ENCODE measurements at regions of chr21 and their contacts with region 1.

Region 1: GRCh38 chr21:46228345-46229051 is at the start of gene LSS:
- DNase-seq: peak; percentile 98
- H3K4me3 ChIP-seq: peak within 1 kb of the TSS; percentile 99
- H3K27ac ChIP-seq: peak within 1 kb of the TSS; percentile 53
- H3K4me1 ChIP-seq: peaks cover 29% of the 10 kb centered on the region
- CTCF ChIP-seq: no peak
- total RNA-seq, gene LSS: 33.9 and 45.4 TPM in 2 replicates

Region 2: DNA sequence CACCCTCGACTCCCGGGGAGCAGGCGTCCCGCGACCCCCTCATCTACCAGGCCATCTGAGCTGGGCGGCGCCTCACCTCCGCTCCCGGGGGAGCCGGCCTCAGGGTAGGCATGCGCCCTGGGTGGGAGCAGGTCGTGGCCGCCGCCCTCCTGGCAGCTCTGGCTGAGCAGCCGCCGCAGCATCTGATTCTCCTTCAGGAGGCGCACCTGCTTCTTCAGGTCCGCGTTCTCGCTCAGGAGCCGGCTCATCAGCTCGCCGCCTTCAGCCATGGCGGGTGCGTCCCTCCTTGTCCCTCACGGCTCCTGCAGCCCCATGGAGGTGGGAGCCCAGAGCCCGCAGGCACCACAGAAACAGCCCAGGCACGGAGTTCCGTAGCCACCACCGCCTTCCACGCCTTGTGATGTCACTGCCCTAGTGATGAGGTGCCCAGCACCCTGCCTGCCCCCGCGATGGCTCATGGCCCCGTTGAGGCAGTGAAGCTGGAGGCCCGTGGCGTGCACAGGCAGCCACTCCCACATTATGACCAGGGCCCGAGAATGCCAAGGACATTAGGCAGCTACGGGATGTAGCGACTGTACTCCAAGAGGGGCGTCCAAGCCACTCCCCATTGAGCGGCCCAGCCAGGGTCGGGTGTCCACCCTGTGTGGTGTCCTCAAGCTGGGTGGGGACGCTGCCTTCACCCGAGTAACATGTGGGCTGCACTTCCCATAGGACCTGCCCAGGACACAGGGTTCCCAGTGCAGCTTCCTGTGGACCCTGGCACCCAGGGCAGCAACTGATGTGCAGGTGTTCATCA is 45.8 kb before region 1 on chr21:
- CTCF ChIA-PET with region 1: no interaction called
- POLR2A ChIA-PET with region 1: interaction called, 10 read pairs
- intact Hi-C with region 1: no loop called
- DNase-seq: no peak
- H3K4me3 ChIP-seq: no peak overlapping the region
- H3K27ac ChIP-seq: no peak overlapping the region
- H3K4me1 ChIP-seq: peaks cover 13% of the 10 kb centered on the region
- CTCF ChIP-seq: no peak

Region 3: GRCh38 chr21:46285761-46286496 is 57.4 kb after region 1 on chr21 and contains the start of gene YBEY:
- CTCF ChIA-PET with region 1: no interaction called
- POLR2A ChIA-PET with region 1: no interaction called
- intact Hi-C with region 1: loop called (anchors 5 kb)
- DNase-seq: peak; percentile 92
- H3K4me3 ChIP-seq: peak within 1 kb of the TSS; percentile 78
- H3K27ac ChIP-seq: peak within 1 kb of the TSS; percentile 78
- H3K4me1 ChIP-seq: peaks cover 45% of the 10 kb centered on the region
- CTCF ChIP-seq: peak; percentile 60
- total RNA-seq, gene YBEY: 18.3 and 24.5 TPM in 2 replicates

Region 4: GRCh38 chr21:46323227-46324128 is 95.0 kb after region 1 on chr21 and contains the start of gene C21orf58:
- CTCF ChIA-PET with region 1: no interaction called
- POLR2A ChIA-PET with region 1: interaction called, 3 read pairs
- intact Hi-C with region 1: loop called (anchors 2 kb)
- DNase-seq: peak; percentile 98
- H3K4me3 ChIP-seq: peak within 1 kb of the TSS; percentile 86
- H3K27ac ChIP-seq: peak within 1 kb of the TSS; percentile 88
- H3K4me1 ChIP-seq: peaks cover 30% of the 10 kb centered on the region
- CTCF ChIP-seq: no peak
- total RNA-seq, gene C21orf58: 102 and 112 TPM in 2 replicates

Region 5: DNA sequence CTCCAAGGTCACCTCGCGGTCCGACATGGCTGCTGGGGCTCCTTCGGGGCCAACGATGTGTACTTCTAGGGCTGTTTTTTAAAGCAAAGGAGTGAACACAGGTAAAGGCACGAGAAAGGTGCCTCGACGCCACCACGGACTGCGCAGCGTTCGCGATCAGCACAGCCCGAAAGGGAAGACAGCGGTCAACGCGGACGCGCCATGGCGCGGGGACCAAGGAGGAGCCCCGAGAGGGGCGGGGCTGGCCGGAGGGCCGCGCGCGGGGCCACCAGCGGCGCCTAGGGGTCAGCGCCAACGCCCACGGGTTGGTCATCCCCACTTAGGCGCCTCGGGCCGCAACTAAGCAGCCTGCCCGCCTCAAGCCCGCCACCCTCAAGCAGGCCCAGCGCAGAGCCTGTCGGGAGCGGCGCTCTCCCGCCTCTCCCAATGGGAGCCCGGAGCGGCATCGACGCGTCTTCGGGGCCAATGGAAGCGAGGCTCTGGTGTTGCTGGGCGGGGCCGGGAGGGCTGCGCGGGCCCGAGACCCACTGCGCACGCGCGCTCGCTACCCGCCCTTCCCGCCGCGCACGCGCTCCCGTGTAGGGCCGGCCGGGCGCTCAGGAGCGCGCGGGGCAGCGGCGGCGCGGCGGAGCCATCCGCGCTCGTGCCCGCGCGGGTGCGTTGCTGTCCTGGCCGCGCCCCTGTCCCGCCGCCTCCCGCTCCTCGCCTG is 230.0 kb after region 1 on chr21 and contains the start of gene DIP2A:
- CTCF ChIA-PET with region 1: no interaction called
- POLR2A ChIA-PET with region 1: no interaction called
- intact Hi-C with region 1: loop called (anchors 1 kb)
- DNase-seq: peak; percentile 98
- H3K4me3 ChIP-seq: peak within 1 kb of the TSS; percentile 89
- H3K27ac ChIP-seq: peak within 1 kb of the TSS; percentile 66
- H3K4me1 ChIP-seq: peaks cover 19% of the 10 kb centered on the region
- CTCF ChIP-seq: no peak
- total RNA-seq, gene DIP2A: 27.9 and 30.2 TPM in 2 replicates